Ascending aorta (tissue), 2 donors: ENCODE measurements at regions of chr1 and their contacts with region 1.

Region 1: GRCh38 chr1:156225677-156226014 is 12.8 kb downstream of the PMF1 start:
- DNase-seq: no peak
- H3K4me3 ChIP-seq: no peak overlapping the region
- H3K27ac ChIP-seq: no peak overlapping the region
- H3K4me1 ChIP-seq: no peaks in the 10 kb centered on the region
- H3K27me3 ChIP-seq: no peaks in the 10 kb centered on the region
- CTCF ChIP-seq: no peak

Region 2: DNA sequence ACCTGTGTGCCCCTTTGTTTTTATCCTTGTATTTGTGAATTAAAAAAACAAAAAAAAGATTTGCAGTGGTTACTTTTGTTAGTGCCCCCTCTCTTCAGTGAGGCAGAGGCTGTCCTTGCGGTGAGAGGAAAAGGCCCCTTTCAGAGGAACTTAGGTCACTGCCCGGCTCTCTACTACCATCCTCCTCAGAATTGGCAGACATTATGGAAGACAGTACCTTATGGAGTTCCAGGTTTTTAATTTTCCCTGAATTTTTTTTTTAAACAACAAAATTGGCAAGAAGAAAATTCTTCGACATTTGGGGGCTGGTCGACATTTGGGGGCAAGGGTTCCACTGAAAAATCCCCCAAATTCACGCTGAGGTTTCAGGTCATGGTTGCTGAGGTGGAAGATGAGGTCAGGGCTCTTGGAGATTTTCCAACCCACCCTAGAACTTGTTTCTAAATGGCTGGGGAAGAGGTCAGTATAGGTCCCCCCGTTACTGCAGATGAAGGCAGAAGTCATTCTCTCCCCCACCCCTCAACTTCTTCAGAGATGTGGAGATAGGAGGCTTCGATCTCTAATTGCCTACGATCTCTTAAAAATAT is 278.9 kb before region 1 on chr1:
- intact Hi-C with region 1: no loop called
- DNase-seq: no peak
- H3K4me3 ChIP-seq: no peak overlapping the region
- H3K27ac ChIP-seq: peak overlapping the region; percentile 48 to 59
- H3K4me1 ChIP-seq: peaks cover 1 to 4% of the 10 kb centered on the region in 2 donors
- H3K27me3 ChIP-seq: no peaks in the 10 kb centered on the region
- CTCF ChIP-seq: no peak

Region 3: DNA sequence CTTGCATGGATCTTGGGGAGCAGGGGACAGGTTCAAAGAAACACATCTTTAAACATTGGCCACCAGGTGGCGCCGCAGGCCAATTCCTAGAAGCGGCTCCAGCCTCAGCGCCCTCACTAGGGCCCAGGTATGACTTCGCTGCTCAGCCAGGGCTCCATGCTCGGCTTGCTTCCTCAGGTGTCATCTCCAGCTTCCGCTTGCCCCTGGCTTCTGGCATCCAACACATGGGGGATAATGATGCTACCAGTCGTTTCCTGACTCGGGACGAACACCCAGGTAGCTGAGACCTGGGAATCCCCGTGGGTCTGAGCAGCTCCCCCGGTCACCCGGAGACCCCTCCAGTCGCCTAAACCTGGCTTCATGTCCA is 134.8 kb before region 1 on chr1:
- intact Hi-C with region 1: loop called (anchors 1 kb)
- DNase-seq: peak in 1 of 2 donors; percentile 89
- H3K4me3 ChIP-seq: no peak overlapping the region
- H3K27ac ChIP-seq: no peak overlapping the region
- H3K4me1 ChIP-seq: peaks cover 0 to 2% of the 10 kb centered on the region in 2 donors
- H3K27me3 ChIP-seq: no peaks in the 10 kb centered on the region
- CTCF ChIP-seq: peak; percentile 80 to 89 (median 87)

Region 4: GRCh38 chr1:156136970-156137483 is 88.6 kb before region 1 on chr1:
- intact Hi-C with region 1: no loop called
- DNase-seq: no peak
- H3K4me3 ChIP-seq: no peak overlapping the region
- H3K27ac ChIP-seq: peak overlapping the region in 1 of 2 donors; percentile 47
- H3K4me1 ChIP-seq: peaks cover 8 to 21% of the 10 kb centered on the region in 2 donors
- H3K27me3 ChIP-seq: no peaks in the 10 kb centered on the region
- CTCF ChIP-seq: no peak

Region 5: GRCh38 chr1:156319664-156320063 is 94.0 kb after region 1 on chr1:
- intact Hi-C with region 1: no loop called
- DNase-seq: no peak
- H3K4me3 ChIP-seq: no peak overlapping the region
- H3K27ac ChIP-seq: no peak overlapping the region
- H3K4me1 ChIP-seq: no peaks in the 10 kb centered on the region
- H3K27me3 ChIP-seq: no peaks in the 10 kb centered on the region
- CTCF ChIP-seq: peak; percentile 8 to 53 (median 19)

Region 6: GRCh38 chr1:157704878-157705277 is 1479.2 kb after region 1 on chr1:
- intact Hi-C with region 1: no loop called
- DNase-seq: no peak
- H3K4me3 ChIP-seq: no peak overlapping the region
- H3K27ac ChIP-seq: no peak overlapping the region
- H3K4me1 ChIP-seq: no peaks in the 10 kb centered on the region
- H3K27me3 ChIP-seq: no peaks in the 10 kb centered on the region
- CTCF ChIP-seq: no peak